ENCODE measurements at regions of chr17 and their contacts with region 1.

Region 1: GRCh38 chr17:63946440-63947367 is 14.6 kb upstream of the CD79B start:
- DNase-seq: peak; percentile 73
- ATAC-seq: peak; percentile 80
- H3K4me3 Mint-ChIP-seq: no peak overlapping the region
- H3K27ac Mint-ChIP-seq: no peak overlapping the region
- H3K4me1 Mint-ChIP-seq: peaks cover 6% of the 10 kb centered on the region; the same call in 1 of the 2 replicates
- H3K27me3 Mint-ChIP-seq: no peaks in the 10 kb centered on the region
- CTCF ChIP-seq: peak; percentile 82

Region 2: GRCh38 chr17:63911657-63912426 is 34.9 kb before region 1 on chr17:
- CTCF ChIA-PET with region 1: interaction called, 43 read pairs
- POLR2A ChIA-PET with region 1: no interaction called
- DNase-seq: peak; percentile 77
- ATAC-seq: peak; percentile 71
- H3K4me3 Mint-ChIP-seq: no peak overlapping the region
- H3K27ac Mint-ChIP-seq: no peak overlapping the region
- H3K4me1 Mint-ChIP-seq: peaks cover 17% of the 10 kb centered on the region
- H3K27me3 Mint-ChIP-seq: peaks cover 4% of the 10 kb centered on the region; the same call in 1 of the 2 replicates
- CTCF ChIP-seq: peak; percentile 96

Region 3: DNA sequence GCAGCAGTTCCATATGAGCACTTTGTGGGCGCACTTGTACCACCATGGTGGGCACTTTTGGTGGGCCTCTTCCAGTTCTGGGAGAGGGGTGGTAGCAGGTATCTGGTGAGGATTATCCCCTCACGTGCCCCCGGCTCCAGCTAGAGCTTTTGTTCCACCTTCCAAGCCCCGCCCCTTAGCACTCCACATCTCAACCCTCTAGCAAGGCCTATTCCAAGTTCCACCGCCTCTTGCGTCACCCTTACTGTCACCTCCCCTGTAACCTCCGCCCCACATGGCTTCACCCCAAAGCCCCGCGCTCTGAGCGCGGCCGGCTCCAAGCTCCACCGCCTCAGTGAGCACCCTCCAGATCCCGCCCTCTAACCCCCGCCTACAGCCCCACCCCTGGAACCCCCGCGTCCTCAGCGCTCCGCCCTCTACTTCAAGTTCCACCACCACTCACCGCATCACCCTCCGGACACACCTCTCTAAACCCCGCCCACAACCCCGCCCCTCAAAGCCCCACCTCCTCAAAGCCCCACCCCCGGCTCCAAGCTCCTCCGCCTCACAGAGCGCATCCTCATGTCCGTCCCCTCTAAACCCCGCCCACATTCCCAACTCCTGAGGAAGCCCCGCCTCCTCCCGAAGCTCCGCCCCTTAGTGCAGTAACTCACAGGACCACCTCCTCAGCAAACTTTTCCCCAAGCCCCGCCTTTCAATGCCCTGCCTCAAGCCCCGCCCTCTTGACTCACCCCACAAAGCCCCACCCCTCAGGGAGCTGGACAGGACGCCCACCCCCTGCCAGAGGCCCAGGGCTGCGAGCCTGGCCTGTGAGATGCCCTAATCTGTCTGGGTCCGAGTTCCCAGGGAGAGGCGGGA is 14.9 kb after region 1 on chr17:
- CTCF ChIA-PET with region 1: interaction called, 46 read pairs
- POLR2A ChIA-PET with region 1: interaction called, 4 read pairs
- DNase-seq: peak; percentile 100
- ATAC-seq: peak; percentile 90
- H3K4me3 Mint-ChIP-seq: peak overlapping the region; percentile 76
- H3K27ac Mint-ChIP-seq: 0 out of 2 replicates have a peak overlapping the region, but pooled peaks have one; percentile 70
- H3K4me1 Mint-ChIP-seq: peaks cover 20% of the 10 kb centered on the region
- H3K27me3 Mint-ChIP-seq: no peaks in the 10 kb centered on the region; the same call in 1 of the 2 replicates
- CTCF ChIP-seq: no peak

Region 4: DNA sequence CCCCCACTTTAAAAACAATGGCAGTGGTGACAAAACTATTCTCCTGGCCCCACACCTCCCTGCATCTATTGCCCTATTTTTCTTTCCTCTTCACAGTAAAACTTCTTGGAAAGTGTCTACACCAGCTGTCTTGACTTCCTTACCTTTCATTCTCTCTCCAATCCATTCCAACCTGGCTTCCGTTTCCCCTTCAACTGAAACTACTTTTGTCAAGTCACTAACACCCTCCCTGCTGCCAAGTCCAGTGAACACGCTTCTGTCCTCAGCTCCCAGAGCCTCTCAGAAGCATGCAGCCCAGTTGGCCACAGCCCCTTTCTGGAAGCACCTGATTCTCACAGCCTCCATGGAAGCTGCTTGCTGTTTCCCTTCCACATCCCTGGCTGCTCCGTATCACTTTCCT is 30.0 kb after region 1 on chr17:
- CTCF ChIA-PET with region 1: interaction called, 21 read pairs
- POLR2A ChIA-PET with region 1: no interaction called
- DNase-seq: no peak
- ATAC-seq: no peak
- H3K4me3 Mint-ChIP-seq: no peak overlapping the region
- H3K27ac Mint-ChIP-seq: no peak overlapping the region
- H3K4me1 Mint-ChIP-seq: 0 out of 2 replicates have a peak, but pooled peaks cover 5% of the 10 kb centered on the region
- H3K27me3 Mint-ChIP-seq: peaks cover under 1% of the 10 kb centered on the region
- CTCF ChIP-seq: no peak

Region 5: GRCh38 chr17:63998050-63998720 is 51.5 kb after region 1 on chr17 and contains the start of gene PRR29:
- CTCF ChIA-PET with region 1: interaction called, 20 read pairs
- POLR2A ChIA-PET with region 1: no interaction called
- DNase-seq: peak; percentile 82
- ATAC-seq: peak; percentile 78
- H3K4me3 Mint-ChIP-seq: peak within 1 kb of the TSS; percentile 86
- H3K27ac Mint-ChIP-seq: no peak within 1 kb of the TSS
- H3K4me1 Mint-ChIP-seq: peaks cover 16% of the 10 kb centered on the region
- H3K27me3 Mint-ChIP-seq: peaks cover 40% of the 10 kb centered on the region
- CTCF ChIP-seq: no peak
- total RNA-seq, gene PRR29: 0.64 to 1.1 TPM (median 0.85 TPM) in 3 replicates

Region 6: GRCh38 chr17:64103391-64104364 is 157.0 kb after region 1 on chr17:
- CTCF ChIA-PET with region 1: no interaction called
- POLR2A ChIA-PET with region 1: no interaction called
- DNase-seq: no peak
- ATAC-seq: no peak
- H3K4me3 Mint-ChIP-seq: no peak overlapping the region
- H3K27ac Mint-ChIP-seq: no peak overlapping the region
- H3K4me1 Mint-ChIP-seq: peaks cover 3% of the 10 kb centered on the region; the same call in 1 of the 2 replicates
- H3K27me3 Mint-ChIP-seq: no peaks in the 10 kb centered on the region
- CTCF ChIP-seq: no peak

Measured in WTC11 (cell line).